Right lobe of liver (tissue), 6 donors: ENCODE measurements at regions of chr15 and their contacts with region 1.

Region 1: GRCh38 chr15:73639464-73640188 is 6.4 kb upstream of the NPTN start:
- DNase-seq: no peak
- ATAC-seq: no peak
- H3K4me3 ChIP-seq: no peak overlapping the region
- H3K27ac ChIP-seq: no peak overlapping the region
- H3K4me1 ChIP-seq: no peaks in the 10 kb centered on the region
- H3K27me3 ChIP-seq: no peaks in the 10 kb centered on the region
- CTCF ChIP-seq: no peak
- POLR2A ChIP-seq: no peak

Region 2: GRCh38 chr15:73560501-73561117 is 79.0 kb before region 1 on chr15:
- intact Hi-C with region 1: loop called in 1 of 2 experiments (anchors 10 kb)
- DNase-seq: no peak
- ATAC-seq: peak; percentile 30 to 69 (median 55)
- H3K4me3 ChIP-seq: no peak overlapping the region
- H3K27ac ChIP-seq: no peak overlapping the region
- H3K4me1 ChIP-seq: no peaks in the 10 kb centered on the region
- H3K27me3 ChIP-seq: no peaks in the 10 kb centered on the region
- CTCF ChIP-seq: peak in 3 of 4 donors; percentile 53 to 56 (median 54)
- POLR2A ChIP-seq: no peak

Region 3: DNA sequence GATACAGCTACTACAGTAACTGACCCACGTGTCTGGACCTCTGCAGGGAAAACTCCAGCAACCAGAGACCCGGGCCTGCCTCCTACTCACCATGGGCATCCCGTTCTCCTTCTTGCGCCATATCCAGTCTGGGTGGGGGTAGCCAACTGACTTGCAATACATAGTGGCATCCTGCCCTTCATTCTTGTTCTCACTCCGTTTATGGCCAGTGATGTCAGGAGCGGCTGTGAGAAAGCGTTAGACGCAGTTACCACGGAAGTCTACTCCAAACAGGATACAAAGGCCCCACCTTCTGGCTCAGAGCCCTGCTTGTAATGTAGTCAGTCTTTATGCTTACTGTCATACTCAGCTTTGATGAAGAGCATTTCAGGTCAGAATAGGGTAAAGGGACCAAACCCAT is 66.1 kb before region 1 on chr15:
- intact Hi-C with region 1: loop called (anchors 10 kb)
- DNase-seq: peak in 1 of 3 donors; percentile 28
- ATAC-seq: peak; percentile 23 to 67 (median 50)
- H3K4me3 ChIP-seq: no peak overlapping the region
- H3K27ac ChIP-seq: no peak overlapping the region
- H3K4me1 ChIP-seq: no peaks in the 10 kb centered on the region
- H3K27me3 ChIP-seq: no peaks in the 10 kb centered on the region
- CTCF ChIP-seq: no peak
- POLR2A ChIP-seq: no peak

Region 4: GRCh38 chr15:73856458-73857192 is 217.0 kb after region 1 on chr15:
- intact Hi-C with region 1: no loop called
- DNase-seq: peak in 1 of 3 donors; percentile 41
- ATAC-seq: no peak
- H3K4me3 ChIP-seq: no peak overlapping the region
- H3K27ac ChIP-seq: no peak overlapping the region
- H3K4me1 ChIP-seq: no peaks in the 10 kb centered on the region
- H3K27me3 ChIP-seq: peaks cover 0 to 7% of the 10 kb centered on the region in 2 donors
- CTCF ChIP-seq: no peak
- POLR2A ChIP-seq: no peak